ENCODE measurements at regions of chr1 and their contacts with region 1.

Region 1: GRCh38 chr1:56803561-56804156 is 15.5 kb downstream of the FYB2 start:
- DNase-seq: peak; percentile 61
- H3K4me3 ChIP-seq: no peak overlapping the region
- H3K27ac ChIP-seq: no peak overlapping the region
- H3K4me1 ChIP-seq: peaks cover 8% of the 10 kb centered on the region
- H3K27me3 ChIP-seq: no peaks in the 10 kb centered on the region
- CTCF ChIP-seq: peak; percentile 44

Region 2: GRCh38 chr1:56758135-56758534 is 45.5 kb before region 1 on chr1:
- intact Hi-C with region 1: loop called (anchors 5 kb)
- DNase-seq: peak; percentile 25
- H3K4me3 ChIP-seq: no peak overlapping the region
- H3K27ac ChIP-seq: no peak overlapping the region
- H3K4me1 ChIP-seq: no peaks in the 10 kb centered on the region
- H3K27me3 ChIP-seq: no peaks in the 10 kb centered on the region
- CTCF ChIP-seq: no peak

Measured in colonic mucosa (tissue), 4 donors.